ENCODE measurements at regions of chr4 and their contacts with region 1.

Region 1: GRCh38 chr4:99117876-99118693 is 26.0 kb downstream of the ADH4 start:
- DNase-seq: no peak
- ATAC-seq: peak; percentile 51

Region 2: GRCh38 chr4:98828801-98829200 is 289.3 kb before region 1 on chr4:
- intact Hi-C with region 1: no loop called
- DNase-seq: peak in 1 of 2 donors; percentile 18
- ATAC-seq: peak; percentile 74

Region 3: DNA sequence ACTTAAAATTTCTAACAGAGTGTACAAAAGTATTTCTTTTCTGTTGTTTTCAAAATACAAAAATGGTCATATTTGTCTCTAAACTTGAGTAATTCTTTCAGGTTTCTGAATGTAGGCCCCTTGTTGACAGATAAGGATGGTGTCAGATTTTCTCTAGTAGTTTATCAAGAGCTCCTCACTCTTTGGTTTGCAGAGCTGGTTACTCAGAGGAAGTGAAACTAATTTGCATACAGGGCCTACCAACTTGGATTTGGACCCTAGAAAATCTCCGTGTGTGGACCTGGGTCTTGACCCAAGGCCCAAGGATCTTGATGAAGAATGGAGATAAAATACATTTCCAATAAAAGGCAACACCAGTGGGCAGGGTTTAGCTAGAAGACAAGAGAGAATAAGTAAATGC is 101.4 kb after region 1 on chr4:
- intact Hi-C with region 1: no loop called
- DNase-seq: no peak
- ATAC-seq: peak; percentile 43

Region 4: GRCh38 chr4:99341426-99341825 is 223.3 kb after region 1 on chr4:
- intact Hi-C with region 1: no loop called
- DNase-seq: no peak
- ATAC-seq: no peak

Region 5: DNA sequence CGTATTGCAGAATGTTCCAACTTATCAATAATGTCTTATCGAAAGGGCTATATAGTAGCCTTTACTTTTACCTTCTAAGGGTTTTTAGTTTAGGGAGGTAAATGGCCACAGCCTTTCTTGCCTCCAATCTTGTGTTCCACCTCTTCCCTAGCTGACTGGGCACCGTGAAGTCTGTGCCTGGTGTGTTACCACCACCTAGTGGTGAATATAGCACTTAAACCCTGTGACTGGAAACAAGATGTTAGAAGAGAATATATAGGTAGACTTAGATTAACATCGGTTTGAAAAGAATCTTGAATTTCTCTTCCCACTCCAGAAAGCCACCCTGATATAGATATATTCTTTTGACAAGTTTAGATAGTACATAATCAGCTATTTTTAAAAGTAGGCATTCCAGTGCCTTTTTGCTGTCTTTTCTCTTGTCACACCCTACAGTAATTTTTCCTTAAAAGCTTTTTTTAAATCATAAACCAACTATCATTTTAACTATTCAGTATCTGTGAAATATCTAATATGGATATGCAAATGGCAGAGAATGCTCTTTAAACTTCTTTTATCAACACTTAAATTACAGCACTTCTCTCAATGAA is 344.9 kb after region 1 on chr4:
- intact Hi-C with region 1: loop called in 1 of 2 experiments (anchors 10 kb)
- DNase-seq: peak; percentile 32 to 47
- ATAC-seq: peak; percentile 99

Measured in left colon (tissue), 2 donors.